Aorta (tissue), 5 donors: ENCODE measurements at regions of chr13 and their contacts with region 1.

Region 1: GRCh38 chr13:110108347-110109174 is 198.4 kb downstream of the COL4A1 start:
- DNase-seq: peak; percentile 86 to 91
- ATAC-seq: peak; percentile 92
- H3K4me3 ChIP-seq: no peak overlapping the region
- H3K27ac ChIP-seq: peak overlapping the region in 1 of 2 donors; percentile 2
- H3K4me1 ChIP-seq: peaks cover 2 to 3% of the 10 kb centered on the region in 2 donors
- H3K27me3 ChIP-seq: no peaks in the 10 kb centered on the region

Region 2: DNA sequence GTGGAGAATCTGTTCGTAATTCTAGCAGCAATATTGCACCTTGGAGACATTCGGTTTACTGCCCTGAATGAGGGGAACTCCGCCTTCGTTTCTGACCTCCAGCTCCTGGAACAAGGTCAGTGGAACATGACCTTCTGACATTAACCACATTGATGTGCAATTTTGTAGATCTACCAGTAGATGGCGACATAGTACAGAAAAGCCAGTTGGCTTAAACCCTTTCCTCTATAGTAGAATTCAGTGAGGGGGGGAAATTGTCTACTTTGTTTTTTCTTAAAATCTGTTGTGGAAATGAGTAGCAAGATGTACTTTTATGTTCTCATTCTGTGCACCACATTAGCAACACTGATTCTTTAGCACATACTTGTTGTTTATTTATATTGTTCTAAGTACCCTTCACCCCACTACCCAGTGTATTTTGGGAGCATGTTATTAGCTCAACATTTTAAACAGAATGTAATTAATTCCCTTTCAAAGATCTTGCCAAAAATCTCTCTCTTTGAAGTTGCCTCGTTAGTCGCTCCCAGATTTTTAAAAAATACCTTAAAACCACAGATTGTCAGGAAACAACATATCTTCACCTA is 1146.9 kb before region 1 on chr13:
- intact Hi-C with region 1: loop called (anchors 2 to 5 kb)
- DNase-seq: no peak
- ATAC-seq: peak; percentile 83
- H3K4me3 ChIP-seq: no peak overlapping the region
- H3K27ac ChIP-seq: no peak overlapping the region
- H3K4me1 ChIP-seq: no peaks in the 10 kb centered on the region
- H3K27me3 ChIP-seq: no peaks in the 10 kb centered on the region

Region 3: DNA sequence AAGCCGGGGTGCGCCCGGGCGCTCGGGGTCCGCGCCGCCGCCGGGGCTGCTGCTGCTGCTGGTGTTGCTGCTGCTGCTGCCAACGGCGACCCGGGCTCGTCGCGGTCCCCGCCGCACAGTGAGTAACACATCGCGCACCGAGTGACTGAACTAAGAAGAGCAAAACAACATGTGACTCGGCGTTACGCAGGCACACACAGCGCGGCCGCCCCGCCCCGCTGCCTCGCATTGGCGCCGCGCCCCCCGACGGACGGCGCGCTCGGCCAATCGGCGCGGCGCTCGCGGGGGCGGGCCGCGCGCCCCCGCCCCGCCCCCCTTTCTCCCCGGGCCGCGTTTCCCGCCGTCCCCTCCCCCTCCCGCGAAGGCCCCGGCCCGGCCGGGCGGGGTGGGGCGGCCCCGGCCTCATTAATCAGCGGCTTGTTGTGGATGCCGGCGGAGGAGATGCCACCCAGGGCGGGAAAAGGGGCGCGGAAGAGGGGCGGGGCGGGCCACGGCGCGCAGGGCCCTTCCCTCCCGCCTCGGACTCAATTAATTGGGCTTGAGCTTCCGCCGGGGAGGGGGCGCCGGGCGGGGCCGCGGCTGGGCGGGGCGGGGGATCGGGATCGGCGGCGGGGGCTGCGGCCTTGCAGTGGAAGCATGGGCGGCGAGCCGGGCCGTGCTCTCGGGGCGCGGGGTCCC is 322.0 kb before region 1 on chr13 and contains the start of gene IRS2:
- intact Hi-C with region 1: loop called (anchors 2 kb)
- DNase-seq: peak; percentile 96 to 97
- ATAC-seq: peak; percentile 86
- H3K4me3 ChIP-seq: peak within 1 kb of the TSS; percentile 97 to 98
- H3K27ac ChIP-seq: peak within 1 kb of the TSS; percentile 89 to 98
- H3K4me1 ChIP-seq: peaks cover 3% of the 10 kb centered on the region in 2 donors
- H3K27me3 ChIP-seq: no peaks in the 10 kb centered on the region
- total RNA-seq, gene IRS2: 15.8 to 31.2 TPM

Region 4: GRCh38 chr13:109955598-109955997 is 153.0 kb before region 1 on chr13:
- intact Hi-C with region 1: no loop called
- DNase-seq: no peak
- ATAC-seq: no peak
- H3K4me3 ChIP-seq: no peak overlapping the region
- H3K27ac ChIP-seq: no peak overlapping the region
- H3K4me1 ChIP-seq: no peaks in the 10 kb centered on the region
- H3K27me3 ChIP-seq: no peaks in the 10 kb centered on the region

Region 5: DNA sequence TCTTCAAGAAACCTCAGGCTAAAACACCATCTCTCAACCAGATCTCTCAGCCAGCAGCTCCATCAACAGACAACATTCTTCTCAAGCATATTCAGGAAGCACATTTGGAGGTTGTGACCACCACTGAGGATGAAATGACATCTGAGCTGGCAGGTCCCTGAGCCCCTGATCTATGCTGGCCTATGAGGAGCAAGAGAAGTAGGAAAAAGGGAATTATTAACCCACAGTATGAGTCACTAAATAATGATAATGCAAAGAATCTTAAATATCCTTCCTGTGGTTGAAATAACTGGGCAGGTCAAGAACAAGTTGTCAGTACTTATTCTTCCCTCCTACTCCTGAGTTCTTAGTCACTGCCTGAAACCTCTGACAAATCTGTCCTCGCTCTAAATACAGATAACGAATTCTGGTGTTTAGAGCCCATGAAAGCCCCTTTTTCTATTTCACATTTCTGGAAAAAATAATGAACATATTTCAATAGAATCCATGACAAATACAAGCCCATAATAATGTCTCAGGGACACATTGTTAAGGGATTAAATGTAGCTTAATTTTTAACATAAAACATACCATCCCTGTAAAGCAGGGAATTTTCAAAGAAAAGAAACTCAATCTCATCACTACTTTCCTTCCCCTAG is 96.3 kb before region 1 on chr13:
- intact Hi-C with region 1: no loop called
- DNase-seq: no peak
- ATAC-seq: no peak
- H3K4me3 ChIP-seq: no peak overlapping the region
- H3K27ac ChIP-seq: no peak overlapping the region
- H3K4me1 ChIP-seq: no peaks in the 10 kb centered on the region
- H3K27me3 ChIP-seq: no peaks in the 10 kb centered on the region

Region 6: GRCh38 chr13:110023729-110024644 is 84.6 kb before region 1 on chr13:
- intact Hi-C with region 1: loop called (anchors 5 to 10 kb)
- DNase-seq: peak; percentile 78 to 84
- ATAC-seq: peak; percentile 91
- H3K4me3 ChIP-seq: no peak overlapping the region
- H3K27ac ChIP-seq: peak overlapping the region; percentile 93 to 95
- H3K4me1 ChIP-seq: peaks cover 7 to 8% of the 10 kb centered on the region in 2 donors
- H3K27me3 ChIP-seq: no peaks in the 10 kb centered on the region

Region 7: GRCh38 chr13:110062077-110062776 is 46.3 kb before region 1 on chr13:
- intact Hi-C with region 1: loop called (anchors 5 kb)
- DNase-seq: no peak
- ATAC-seq: no peak
- H3K4me3 ChIP-seq: no peak overlapping the region
- H3K27ac ChIP-seq: no peak overlapping the region
- H3K4me1 ChIP-seq: no peaks in the 10 kb centered on the region
- H3K27me3 ChIP-seq: no peaks in the 10 kb centered on the region